Activated CD4-positive, alpha-beta T cell treated with anti-CD3 and anti-CD28 coated beads, Interleukin-2, amount 10 ng/mL, durations not matched to agents 24 days and 14 days (primary cell): ENCODE measurements at regions of chr14 and their contacts with region 1.

Region 1: GRCh38 chr14:65287264-65288131 is 125.0 kb upstream of the FUT8 start:
- DNase-seq: peak; percentile 89
- H3K4me3 Mint-ChIP-seq: peak overlapping the region; percentile 78
- H3K27ac Mint-ChIP-seq: peak overlapping the region; percentile 98
- H3K4me1 Mint-ChIP-seq: peaks cover 66% of the 10 kb centered on the region
- H3K27me3 Mint-ChIP-seq: no peaks in the 10 kb centered on the region

Region 2: DNA sequence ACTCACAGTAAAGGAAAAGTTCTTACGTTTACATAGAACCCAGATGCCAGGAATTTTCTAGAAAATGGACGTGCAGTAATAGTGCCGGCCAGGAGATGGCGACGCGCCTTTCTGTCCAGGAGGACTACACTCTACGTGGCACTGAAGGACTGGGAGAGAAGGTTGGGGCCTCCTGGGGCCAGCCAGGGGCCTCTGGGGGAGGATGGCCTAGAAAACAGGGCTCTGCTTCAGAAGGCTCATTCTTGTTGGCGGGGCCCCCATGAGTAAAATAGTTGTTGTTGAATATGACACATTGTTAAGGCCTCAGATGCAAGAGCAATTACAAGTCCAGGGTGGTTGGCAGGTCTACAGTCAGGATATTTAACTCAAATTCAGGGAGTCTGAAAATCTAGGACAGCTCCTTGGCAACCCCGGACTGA is 65.0 kb before region 1 on chr14:
- intact Hi-C with region 1: loop called (anchors 2 kb)
- DNase-seq: peak; percentile 86
- H3K4me3 Mint-ChIP-seq: no peak overlapping the region
- H3K27ac Mint-ChIP-seq: peak overlapping the region; percentile 2
- H3K4me1 Mint-ChIP-seq: peaks cover 45% of the 10 kb centered on the region
- H3K27me3 Mint-ChIP-seq: no peaks in the 10 kb centered on the region

Region 3: DNA sequence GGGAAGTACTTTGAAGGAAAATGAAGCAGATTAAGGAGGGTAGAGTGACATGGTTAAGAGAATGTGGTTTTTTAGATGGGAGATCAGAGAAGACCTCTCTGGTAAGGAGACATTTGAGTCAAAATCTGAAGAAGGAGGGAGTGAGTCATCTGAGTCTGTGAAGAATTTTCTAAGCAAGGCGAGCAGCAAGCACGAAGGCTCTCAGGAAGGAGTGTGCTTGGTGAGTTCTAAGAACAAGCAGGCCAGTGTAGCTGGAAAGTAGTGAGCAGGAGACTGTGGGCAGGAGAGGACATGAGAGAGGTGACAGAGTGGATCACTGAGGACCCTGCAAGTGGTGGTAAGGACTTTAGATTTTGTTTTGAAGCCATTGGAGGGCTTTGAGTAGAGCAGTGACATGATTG is 48.7 kb after region 1 on chr14:
- intact Hi-C with region 1: loop called (anchors 1 kb)
- DNase-seq: peak; percentile 88
- H3K4me3 Mint-ChIP-seq: peak overlapping the region; percentile 90
- H3K27ac Mint-ChIP-seq: peak overlapping the region; percentile 98
- H3K4me1 Mint-ChIP-seq: peaks cover 55% of the 10 kb centered on the region
- H3K27me3 Mint-ChIP-seq: no peaks in the 10 kb centered on the region

Region 4: GRCh38 chr14:65373679-65374039 is 86.2 kb after region 1 on chr14:
- intact Hi-C with region 1: loop called (anchors 1 kb)
- DNase-seq: no peak
- H3K4me3 Mint-ChIP-seq: no peak overlapping the region
- H3K27ac Mint-ChIP-seq: peak overlapping the region; percentile 70
- H3K4me1 Mint-ChIP-seq: peaks cover 43% of the 10 kb centered on the region
- H3K27me3 Mint-ChIP-seq: no peaks in the 10 kb centered on the region

Region 5: DNA sequence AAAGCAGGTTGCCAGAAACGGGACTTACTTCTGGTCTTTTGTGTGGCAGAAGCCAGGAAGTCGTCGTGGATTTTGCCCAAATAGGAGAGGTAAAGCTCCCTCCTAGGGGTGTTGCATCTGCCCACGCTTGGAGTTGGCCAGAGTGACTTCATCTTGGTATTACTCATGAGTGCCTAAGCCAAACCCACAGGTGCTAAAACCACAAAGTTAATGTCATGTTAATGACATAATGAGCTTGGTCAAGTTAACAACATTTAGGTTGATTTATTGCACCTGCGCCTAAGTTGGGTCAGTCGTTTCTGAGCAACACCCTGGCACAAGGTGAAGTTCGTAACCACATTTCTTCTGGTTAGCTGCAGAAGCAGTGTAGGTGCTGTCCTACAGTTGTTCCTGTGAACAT is 350.3 kb after region 1 on chr14:
- intact Hi-C with region 1: loop called (anchors 5 kb)
- DNase-seq: peak; percentile 77
- H3K4me3 Mint-ChIP-seq: peak overlapping the region; percentile 23
- H3K27ac Mint-ChIP-seq: peak overlapping the region; percentile 77
- H3K4me1 Mint-ChIP-seq: peaks cover 44% of the 10 kb centered on the region
- H3K27me3 Mint-ChIP-seq: no peaks in the 10 kb centered on the region